Body of pancreas (tissue), 4 donors: ENCODE measurements at regions of chr19 and their contacts with region 1.

Region 1: DNA sequence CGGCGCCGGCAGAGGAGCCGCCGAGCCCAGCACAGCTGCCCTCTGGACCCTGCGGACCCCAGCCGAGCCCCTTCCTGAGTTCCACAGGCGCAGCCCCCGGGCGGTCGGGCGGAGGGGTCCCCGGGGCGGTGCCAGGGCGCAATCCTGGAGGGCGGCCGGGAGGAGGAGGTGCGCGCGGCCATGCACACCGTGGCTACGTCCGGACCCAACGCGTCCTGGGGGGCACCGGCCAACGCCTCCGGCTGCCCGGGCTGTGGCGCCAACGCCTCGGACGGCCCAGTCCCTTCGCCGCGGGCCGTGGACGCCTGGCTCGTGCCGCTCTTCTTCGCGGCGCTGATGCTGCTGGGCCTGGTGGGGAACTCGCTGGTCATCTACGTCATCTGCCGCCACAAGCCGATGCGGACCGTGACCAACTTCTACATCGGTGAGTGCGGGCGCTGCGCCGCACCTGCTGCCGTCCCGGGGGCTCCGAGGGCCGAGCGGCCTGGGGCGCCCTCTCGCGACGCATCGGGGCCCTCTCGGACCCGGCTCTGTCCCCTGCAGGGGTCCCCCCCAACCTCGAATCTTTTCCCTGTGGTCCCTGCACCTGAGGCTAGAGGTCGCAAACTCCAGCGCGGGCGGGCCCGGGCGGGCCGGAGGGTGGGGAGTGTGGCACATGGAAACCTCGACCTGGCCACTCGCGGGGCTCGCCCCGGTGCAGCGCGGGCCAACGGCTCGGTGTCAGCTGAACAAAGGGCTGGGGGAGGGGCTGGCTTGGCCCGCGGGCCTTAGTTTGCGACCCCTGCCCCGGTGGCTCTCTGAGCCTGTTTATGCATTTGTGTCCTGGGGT is at the start of gene KISS1R:
- DNase-seq: peak in 2 of 4 donors; percentile 42 to 52
- ATAC-seq: no peak
- H3K4me3 ChIP-seq: peak within 1 kb of the TSS in 1 of 2 donors; percentile 1
- H3K27ac ChIP-seq: no peak within 1 kb of the TSS
- H3K4me1 ChIP-seq: peaks cover 43% of the 10 kb centered on the region
- H3K27me3 ChIP-seq: peaks cover 0 to 22% of the 10 kb centered on the region in 2 donors
- CTCF ChIP-seq: peak; percentile 14 to 52 (median 31)
- POLR2A ChIP-seq: no peak
- total RNA-seq, gene KISS1R: 3.3 TPM in 1 of 2 donors, not detected in the other

Region 2: DNA sequence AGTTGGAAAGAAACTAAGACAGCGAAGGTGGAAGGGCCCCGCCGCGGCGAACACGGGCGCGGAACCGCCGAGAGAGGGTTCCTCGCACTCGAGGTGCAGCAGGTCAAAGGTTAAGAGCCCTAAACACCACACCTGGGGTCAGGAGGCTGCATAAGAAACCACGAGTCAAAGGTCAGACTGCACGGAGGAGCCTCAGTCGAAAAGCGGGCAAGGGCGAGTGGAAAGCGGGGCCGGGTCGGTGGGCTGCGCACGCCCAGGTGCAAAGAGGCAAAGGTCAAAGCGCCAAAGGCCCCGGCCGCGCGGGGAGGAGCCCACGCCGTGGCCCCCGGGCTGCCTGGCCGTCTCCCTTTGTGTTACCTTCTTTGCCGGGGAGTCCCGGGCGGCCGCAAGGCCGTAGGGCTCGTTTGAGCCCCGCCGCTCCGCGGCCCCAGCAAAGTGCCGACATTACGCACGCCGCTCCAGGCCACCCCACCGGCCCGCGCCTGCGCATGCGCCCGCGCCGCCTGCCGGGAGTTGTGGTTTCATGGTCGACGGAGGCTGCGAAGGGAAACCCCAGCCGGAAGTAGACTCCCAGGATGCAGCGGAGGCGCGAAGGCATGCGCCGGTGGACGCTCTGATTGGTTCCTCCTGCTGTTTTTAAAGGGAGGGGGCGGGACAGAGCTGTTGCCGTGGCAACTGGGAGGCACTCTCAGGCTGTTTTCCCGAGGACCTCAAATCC is 284.3 kb before region 1 on chr19 and contains the start of gene POLRMT:
- intact Hi-C with region 1: no loop called
- DNase-seq: peak; percentile 98 to 99 (median 99)
- ATAC-seq: peak; percentile 100
- H3K4me3 ChIP-seq: peak within 1 kb of the TSS; percentile 53 to 87
- H3K27ac ChIP-seq: peak within 1 kb of the TSS in 3 of 4 donors; percentile 38 to 66 (median 60)
- H3K4me1 ChIP-seq: peaks cover 27% of the 10 kb centered on the region
- H3K27me3 ChIP-seq: no peaks in the 10 kb centered on the region
- CTCF ChIP-seq: peak in 5 of 7 experiments; percentile 9 to 53 (median 32)
- POLR2A ChIP-seq: peak in 2 of 3 donors; percentile 29 to 46
- total RNA-seq, gene POLRMT: 25.4 to 46.1 TPM

Region 3: DNA sequence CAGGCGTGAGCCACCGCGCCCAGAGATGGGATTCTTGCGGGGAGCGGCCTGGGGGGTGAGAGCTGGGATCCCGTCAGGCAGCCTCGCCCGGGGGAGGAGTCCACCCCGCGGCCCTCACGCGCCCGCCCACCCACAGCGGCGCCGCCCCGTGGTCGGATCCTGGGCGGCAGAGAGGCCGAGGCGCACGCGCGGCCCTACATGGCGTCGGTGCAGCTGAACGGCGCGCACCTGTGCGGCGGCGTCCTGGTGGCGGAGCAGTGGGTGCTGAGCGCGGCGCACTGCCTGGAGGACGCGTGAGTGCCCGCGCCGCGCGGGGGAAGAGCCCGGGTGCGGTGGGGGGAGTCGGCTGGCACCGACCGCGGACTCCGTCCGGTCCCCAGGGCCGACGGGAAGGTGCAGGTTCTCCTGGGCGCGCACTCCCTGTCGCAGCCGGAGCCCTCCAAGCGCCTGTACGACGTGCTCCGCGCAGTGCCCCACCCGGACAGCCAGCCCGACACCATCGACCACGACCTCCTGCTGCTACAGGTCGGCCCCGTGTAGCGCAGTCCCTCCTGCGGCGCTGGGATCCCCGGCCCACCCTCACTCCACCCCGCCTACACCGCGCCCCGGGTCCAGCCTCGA is 56.9 kb before region 1 on chr19:
- intact Hi-C with region 1: loop called (anchors 5 kb)
- DNase-seq: peak; percentile 54 to 70 (median 66)
- ATAC-seq: peak; percentile 39
- H3K4me3 ChIP-seq: peak overlapping the region in 1 of 2 donors; percentile 9
- H3K27ac ChIP-seq: no peak overlapping the region
- H3K4me1 ChIP-seq: peaks cover 27% of the 10 kb centered on the region
- H3K27me3 ChIP-seq: no peaks in the 10 kb centered on the region
- CTCF ChIP-seq: peak in 1 of 7 experiments; percentile 26
- POLR2A ChIP-seq: no peak

Region 4: DNA sequence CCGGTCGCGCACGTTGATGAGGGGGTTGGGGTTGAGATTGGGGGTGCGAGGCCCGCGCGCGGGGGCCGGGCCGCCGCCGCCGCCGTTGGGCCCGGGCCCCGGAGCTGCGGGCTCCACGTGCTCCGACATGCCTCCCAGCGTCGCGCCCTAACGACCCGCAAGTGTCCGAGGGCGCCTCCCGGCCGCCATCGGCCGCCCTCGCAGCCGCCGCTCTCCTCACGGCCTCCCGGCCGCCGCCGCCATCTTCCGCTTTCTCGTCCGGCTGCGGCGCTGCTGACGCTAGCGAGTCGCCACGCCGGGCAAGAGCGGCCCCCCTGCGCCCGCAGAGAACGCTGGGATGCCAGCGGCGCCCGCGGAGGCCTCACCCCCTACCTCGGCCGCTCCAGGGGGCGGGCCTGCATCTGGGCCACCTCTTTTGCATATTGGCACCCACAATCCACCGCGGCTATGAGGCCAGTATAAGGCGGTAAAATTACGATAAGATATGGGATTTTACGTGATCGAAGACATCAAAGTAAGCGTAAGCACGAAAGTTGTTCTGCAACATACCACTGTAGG is 103.4 kb after region 1 on chr19 and contains the start of gene TMEM259:
- intact Hi-C with region 1: no loop called
- DNase-seq: peak; percentile 98 to 99 (median 98)
- ATAC-seq: peak; percentile 91
- H3K4me3 ChIP-seq: peak within 1 kb of the TSS; percentile 63 to 77
- H3K27ac ChIP-seq: peak within 1 kb of the TSS; percentile 81 to 97 (median 92)
- H3K4me1 ChIP-seq: peaks cover 57% of the 10 kb centered on the region
- H3K27me3 ChIP-seq: no peaks in the 10 kb centered on the region
- CTCF ChIP-seq: peak in 1 of 7 experiments; percentile 20
- POLR2A ChIP-seq: peak in 1 of 3 donors; percentile 79
- total RNA-seq, gene TMEM259: 142 to 306 TPM